CD8-positive, alpha-beta memory T cell (primary cell): ENCODE measurements at regions of chr15 and their contacts with region 1.

Region 1: GRCh38 chr15:40440743-40441564 is at the start of gene BAHD1:
- DNase-seq: peak; percentile 90 to 96 (median 94)
- H3K4me3 ChIP-seq: peak within 1 kb of the TSS; percentile 72
- H3K4me3 Mint-ChIP-seq: peak within 1 kb of the TSS; percentile 92 to 97 (median 95)
- H3K27ac ChIP-seq: peak within 1 kb of the TSS; percentile 66
- H3K27ac Mint-ChIP-seq: peak within 1 kb of the TSS in 7 of 8 donors; percentile 74 to 92 (median 88)
- H3K4me1 ChIP-seq: peaks cover 63% of the 10 kb centered on the region
- H3K4me1 Mint-ChIP-seq: peaks cover 58 to 71% (median 58%) of the 10 kb centered on the region in 3 donors
- H3K27me3 ChIP-seq: peaks cover 6% of the 10 kb centered on the region
- H3K27me3 Mint-ChIP-seq: peaks cover 11 to 15% of the 10 kb centered on the region in 2 donors
- total RNA-seq, gene BAHD1: 23.6 to 24.9 TPM

Region 2: GRCh38 chr15:40405501-40406381 is 35.2 kb before region 1 on chr15 and contains the start of gene IVD:
- CTCF ChIA-PET with region 1: interaction called, 3 read pairs
- POLR2A ChIA-PET with region 1: interaction called, 10 read pairs
- DNase-seq: peak; percentile 87 to 93 (median 88)
- H3K4me3 ChIP-seq: peak within 1 kb of the TSS; percentile 85
- H3K4me3 Mint-ChIP-seq: peak within 1 kb of the TSS; percentile 86 to 96 (median 91)
- H3K27ac ChIP-seq: peak within 1 kb of the TSS; percentile 57
- H3K27ac Mint-ChIP-seq: peak within 1 kb of the TSS; percentile 68 to 93 (median 88)
- H3K4me1 ChIP-seq: peaks cover 24% of the 10 kb centered on the region
- H3K4me1 Mint-ChIP-seq: peaks cover 31 to 54% (median 45%) of the 10 kb centered on the region in 3 donors
- H3K27me3 ChIP-seq: no peaks in the 10 kb centered on the region
- H3K27me3 Mint-ChIP-seq: no peaks in the 10 kb centered on the region
- total RNA-seq, gene IVD: 68.5 to 80.1 TPM

Region 3: DNA sequence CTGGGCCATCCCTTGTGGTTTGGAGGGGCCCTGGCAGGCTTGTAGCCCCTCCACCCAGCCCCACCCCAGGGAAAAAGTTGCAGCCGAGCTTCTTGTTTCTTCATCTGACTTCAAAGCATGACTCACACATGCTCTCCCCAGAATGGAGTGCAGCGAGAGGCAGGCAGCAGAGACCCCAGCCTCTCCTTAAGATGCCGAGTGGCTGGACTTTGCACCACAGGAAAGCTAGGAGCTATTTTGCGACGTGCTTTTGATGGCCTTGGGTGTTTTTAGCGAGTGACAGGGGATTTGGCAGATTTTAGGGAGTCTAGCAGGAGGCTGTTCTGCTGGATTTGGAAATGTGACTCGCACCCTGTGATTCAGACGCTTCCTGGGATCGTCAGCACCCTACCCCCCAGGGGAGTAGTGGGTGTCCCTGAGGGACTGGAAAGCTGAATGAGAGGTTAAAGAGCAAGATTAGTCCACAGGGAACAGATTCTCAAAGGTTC is 14.0 kb after region 1 on chr15:
- CTCF ChIA-PET with region 1: interaction called, 16 read pairs
- POLR2A ChIA-PET with region 1: interaction called, 41 read pairs
- DNase-seq: no peak
- H3K4me3 ChIP-seq: peak overlapping the region; percentile 14
- H3K4me3 Mint-ChIP-seq: peak overlapping the region in 5 of 7 donors; percentile 52 to 82 (median 58)
- H3K27ac ChIP-seq: no peak overlapping the region
- H3K27ac Mint-ChIP-seq: peak overlapping the region; percentile 39 to 91 (median 78)
- H3K4me1 ChIP-seq: peaks cover 74% of the 10 kb centered on the region
- H3K4me1 Mint-ChIP-seq: peaks cover 64 to 79% (median 66%) of the 10 kb centered on the region in 3 donors
- H3K27me3 ChIP-seq: no peaks in the 10 kb centered on the region
- H3K27me3 Mint-ChIP-seq: no peaks in the 10 kb centered on the region